SK-N-SH (cell line): ENCODE measurements at regions of chr22 and their contacts with region 1.

Region 1: DNA sequence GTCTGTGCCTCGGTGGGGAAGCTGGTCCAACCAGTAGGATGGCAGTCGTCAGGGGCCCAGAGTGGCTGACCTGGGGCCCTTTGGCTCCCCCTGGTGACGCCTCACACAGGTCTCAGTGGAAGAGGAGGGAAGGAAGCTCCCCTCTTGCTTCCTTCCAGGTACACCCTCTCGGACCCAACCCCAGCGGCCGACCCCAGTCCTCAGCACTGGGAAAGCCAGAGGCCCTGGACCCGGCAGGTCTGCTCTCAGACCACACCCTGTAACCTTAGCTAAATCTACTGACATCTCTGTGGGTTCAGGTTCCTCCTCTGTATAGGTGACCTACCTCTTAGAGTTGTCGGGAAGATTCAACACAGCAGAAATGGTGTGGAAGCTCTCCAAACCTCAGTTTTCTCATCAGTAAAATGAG is 3.4 kb upstream of the SCUBE1 start:
- DNase-seq: peak; percentile 73
- H3K4me3 ChIP-seq: no peak overlapping the region
- H3K27ac ChIP-seq: no peak overlapping the region
- H3K4me1 ChIP-seq: peaks cover 0 to 4% of the 10 kb centered on the region in 2 experiments; a peak in 1 of 4 replicates
- H3K27me3 ChIP-seq: no peaks in the 10 kb centered on the region
- CTCF ChIP-seq: peak; percentile 49
- EP300 ChIP-seq: no peak
- RAD21 ChIP-seq: peak; percentile 71

Region 2: GRCh38 chr22:43080616-43081015 is 265.9 kb before region 1 on chr22:
- CTCF ChIA-PET with region 1: no interaction called
- POLR2A ChIA-PET with region 1: no interaction called
- DNase-seq: no peak
- H3K4me3 ChIP-seq: no peak overlapping the region
- H3K27ac ChIP-seq: no peak overlapping the region
- H3K4me1 ChIP-seq: no peaks in the 10 kb centered on the region
- H3K27me3 ChIP-seq: no peaks in the 10 kb centered on the region
- CTCF ChIP-seq: no peak
- EP300 ChIP-seq: no peak
- RAD21 ChIP-seq: no peak

Region 3: GRCh38 chr22:43230971-43231723 is 115.4 kb before region 1 on chr22:
- CTCF ChIA-PET with region 1: interaction called, 66 read pairs
- POLR2A ChIA-PET with region 1: no interaction called
- DNase-seq: peak; percentile 79
- H3K4me3 ChIP-seq: peak overlapping the region in 1 of 2 experiments; percentile 54; a peak in 1 of 4 replicates
- H3K27ac ChIP-seq: peak overlapping the region in 1 of 2 experiments; percentile 25; a peak in 1 of 4 replicates
- H3K4me1 ChIP-seq: peaks cover 0 to 37% of the 10 kb centered on the region in 2 experiments; a peak in 1 of 4 replicates
- H3K27me3 ChIP-seq: no peaks in the 10 kb centered on the region
- CTCF ChIP-seq: peak; percentile 69
- EP300 ChIP-seq: no peak
- RAD21 ChIP-seq: peak; percentile 83

Region 4: DNA sequence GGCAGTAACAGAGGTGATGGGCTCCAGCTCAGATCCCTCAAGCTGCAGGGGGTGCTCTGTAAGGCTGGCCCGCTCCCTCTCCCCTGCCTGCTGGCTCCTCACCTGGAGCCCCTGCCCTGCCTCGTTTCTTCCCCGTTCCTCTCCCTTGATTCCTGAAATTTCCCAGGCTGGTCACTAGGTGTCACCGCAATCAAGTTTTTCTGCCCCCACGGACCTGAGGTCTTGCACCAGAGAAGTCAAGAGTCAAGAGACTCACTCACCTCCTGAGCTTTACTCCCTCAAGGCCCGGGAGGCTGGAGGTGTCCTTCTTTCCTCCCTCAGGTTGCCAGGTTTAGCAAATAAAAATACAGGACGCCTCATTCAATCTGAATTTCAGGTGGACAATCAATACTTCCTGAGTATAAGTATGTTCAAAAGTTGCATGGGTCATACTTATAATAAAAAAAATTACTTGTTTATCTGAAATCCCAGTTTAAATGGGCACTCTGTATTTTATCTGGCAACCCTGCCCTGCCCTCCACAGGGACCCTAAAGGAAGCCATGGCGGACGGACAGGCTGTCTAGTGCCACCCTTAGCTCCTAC is 72.5 kb before region 1 on chr22:
- CTCF ChIA-PET with region 1: interaction called, 207 read pairs
- POLR2A ChIA-PET with region 1: interaction called, 3 read pairs
- DNase-seq: peak; percentile 78
- H3K4me3 ChIP-seq: no peak overlapping the region; a peak in 1 of 4 replicates
- H3K27ac ChIP-seq: no peak overlapping the region
- H3K4me1 ChIP-seq: peaks cover 0 to 32% of the 10 kb centered on the region in 2 experiments; a peak in 1 of 4 replicates
- H3K27me3 ChIP-seq: no peaks in the 10 kb centered on the region
- CTCF ChIP-seq: peak; percentile 54
- EP300 ChIP-seq: no peak
- RAD21 ChIP-seq: peak; percentile 86

Region 5: DNA sequence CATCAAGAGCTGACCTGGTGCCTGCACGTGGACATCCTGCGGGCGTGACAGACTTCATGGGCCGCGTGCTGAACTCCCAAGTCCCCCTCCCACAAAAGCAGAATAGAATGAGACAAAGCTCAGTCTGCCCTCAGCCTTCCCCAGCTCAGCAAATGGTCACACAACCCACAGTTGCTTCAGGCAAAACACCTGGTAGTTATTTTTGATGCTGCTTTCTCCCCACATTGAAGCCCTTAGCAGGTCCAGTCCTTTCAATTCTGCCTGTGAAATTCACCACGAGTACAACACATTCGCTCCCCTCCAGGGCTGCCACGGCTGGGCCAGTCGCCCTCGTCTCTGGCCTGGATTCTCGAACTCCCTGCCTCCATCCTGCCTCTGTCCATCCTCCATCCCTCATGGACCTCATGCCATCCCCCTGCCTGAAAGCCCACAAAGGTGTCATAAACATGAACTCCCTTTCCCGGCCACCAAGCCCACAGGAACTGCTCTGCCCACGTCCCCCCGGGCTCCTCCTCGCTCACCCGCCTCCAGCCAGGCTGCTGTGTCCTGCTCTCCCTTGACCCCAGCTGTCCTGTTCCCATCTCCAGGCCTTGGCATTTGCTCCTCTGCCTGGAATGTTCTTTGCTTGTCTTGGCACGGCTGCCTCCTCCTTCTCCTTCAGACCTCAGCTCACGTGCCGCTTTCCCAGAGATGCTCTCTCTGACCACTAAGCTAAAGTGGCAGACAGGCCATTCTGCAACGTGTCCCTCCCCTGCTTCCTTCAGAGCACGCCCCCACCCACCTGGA is 45.4 kb before region 1 on chr22:
- CTCF ChIA-PET with region 1: interaction called, 23 read pairs
- POLR2A ChIA-PET with region 1: no interaction called
- DNase-seq: no peak
- H3K4me3 ChIP-seq: no peak overlapping the region
- H3K27ac ChIP-seq: peak overlapping the region in 1 of 2 experiments; percentile 76; a peak in 2 of 4 replicates
- H3K4me1 ChIP-seq: peaks cover 0 to 85% of the 10 kb centered on the region in 2 experiments; a peak in 1 of 4 replicates
- H3K27me3 ChIP-seq: no peaks in the 10 kb centered on the region
- CTCF ChIP-seq: no peak
- EP300 ChIP-seq: no peak; a peak in 1 of 4 replicates
- RAD21 ChIP-seq: no peak

Region 6: GRCh38 chr22:43356881-43357280 is 10.4 kb after region 1 on chr22:
- CTCF ChIA-PET with region 1: interaction called, 18 read pairs
- POLR2A ChIA-PET with region 1: no interaction called
- DNase-seq: no peak
- H3K4me3 ChIP-seq: no peak overlapping the region
- H3K27ac ChIP-seq: no peak overlapping the region
- H3K4me1 ChIP-seq: no peaks in the 10 kb centered on the region
- H3K27me3 ChIP-seq: no peaks in the 10 kb centered on the region
- CTCF ChIP-seq: no peak
- EP300 ChIP-seq: no peak
- RAD21 ChIP-seq: no peak

Region 7: GRCh38 chr22:43481568-43482317 is 135.2 kb after region 1 on chr22:
- CTCF ChIA-PET with region 1: no interaction called
- POLR2A ChIA-PET with region 1: no interaction called
- DNase-seq: no peak
- H3K4me3 ChIP-seq: no peak overlapping the region
- H3K27ac ChIP-seq: no peak overlapping the region
- H3K4me1 ChIP-seq: no peaks in the 10 kb centered on the region
- H3K27me3 ChIP-seq: no peaks in the 10 kb centered on the region
- CTCF ChIP-seq: no peak
- EP300 ChIP-seq: no peak
- RAD21 ChIP-seq: peak; percentile 26